ENCODE measurements at regions of chr6 and their contacts with region 1.

Region 1: GRCh38 chr6:127302728-127303660 is 36.3 kb downstream of the RNF146 start:
- DNase-seq: no peak

Region 2: GRCh38 chr6:127420556-127420955 is 117.6 kb after region 1 on chr6:
- intact Hi-C with region 1: no loop called
- DNase-seq: no peak

Region 3: GRCh38 chr6:127547215-127547614 is 244.2 kb after region 1 on chr6:
- intact Hi-C with region 1: loop called (anchors 5 to 10 kb)
- DNase-seq: no peak